ENCODE measurements at regions of chr7 and their contacts with region 1.

Region 1: DNA sequence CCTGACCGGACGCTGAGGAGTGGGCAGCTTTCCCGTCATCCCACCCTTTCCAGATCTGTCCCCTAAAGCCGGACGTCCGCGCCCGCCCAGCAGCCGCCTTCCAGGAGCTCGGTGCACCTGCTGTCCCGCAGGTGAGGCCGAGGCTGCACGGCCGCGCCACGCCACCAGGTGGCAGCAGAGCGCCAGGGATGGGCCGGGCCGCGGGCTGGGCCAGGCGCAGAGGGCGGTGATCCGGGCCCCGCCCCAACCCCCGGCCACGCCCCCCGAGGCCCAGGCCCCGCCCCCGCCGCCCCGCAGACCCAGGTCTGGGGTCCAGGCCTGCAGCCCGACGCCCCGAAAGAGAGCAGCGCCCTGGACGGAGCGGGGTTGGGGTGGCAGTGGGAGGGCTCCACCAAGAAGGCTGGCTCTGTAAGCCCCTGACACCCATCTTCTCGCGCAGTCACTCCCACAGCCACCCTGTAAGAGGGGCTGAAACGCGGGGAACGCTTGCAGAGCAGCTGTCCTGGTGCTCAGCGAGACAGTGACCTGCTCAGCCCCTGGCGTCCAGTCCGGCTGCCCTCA is 32.2 kb downstream of the FOXL3 start:
- DNase-seq: peak; percentile 62 to 85 (median 79)
- H3K4me3 ChIP-seq: no peak overlapping the region
- H3K27ac ChIP-seq: no peak overlapping the region
- H3K4me1 ChIP-seq: no peaks in the 10 kb centered on the region
- H3K27me3 ChIP-seq: no peaks in the 10 kb centered on the region
- CTCF ChIP-seq: peak; percentile 63 to 93 (median 90)
- EP300 ChIP-seq: no peak
- POLR2A ChIP-seq: no peak

Region 2: DNA sequence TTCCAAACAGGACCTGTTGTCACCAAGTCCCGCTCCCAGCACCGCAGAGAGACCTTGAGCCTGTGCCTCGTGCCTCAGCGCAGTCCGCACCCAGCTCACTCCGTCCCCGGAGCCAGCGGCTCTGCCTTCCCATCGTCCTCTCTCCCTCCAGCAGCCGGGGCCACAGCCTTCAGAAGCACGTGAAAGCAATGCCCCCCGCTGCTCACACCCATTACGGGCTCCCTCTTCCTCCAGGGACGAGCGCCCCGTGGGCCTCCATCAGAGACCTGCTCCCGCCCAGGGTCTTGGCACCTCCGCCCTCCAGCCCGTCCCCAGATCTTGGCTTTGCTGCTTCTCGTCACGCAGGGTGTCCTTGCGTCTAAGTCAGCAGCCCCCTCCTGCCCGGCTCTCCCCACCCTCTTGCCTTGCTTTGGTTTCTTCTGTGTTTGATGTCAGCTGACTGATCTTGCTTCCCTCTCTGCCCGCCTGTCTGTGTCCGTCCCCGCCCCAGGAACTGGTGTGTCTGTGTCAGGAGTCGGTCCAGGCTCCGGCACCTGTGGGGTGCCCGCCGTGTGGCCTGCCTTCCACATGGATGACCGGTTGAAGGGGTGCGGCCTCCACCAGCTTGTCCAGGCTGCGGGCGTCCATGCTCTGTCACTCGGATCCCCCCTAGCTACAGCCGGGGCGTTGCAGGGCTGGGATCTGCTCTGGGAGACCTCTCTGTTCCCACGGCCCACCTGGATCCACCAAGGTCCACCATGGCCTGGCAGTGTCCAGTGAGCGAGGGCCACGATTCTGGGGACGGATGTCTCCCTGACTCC is 29.7 kb after region 1 on chr7:
- intact Hi-C with region 1: no loop called
- DNase-seq: no peak
- H3K4me3 ChIP-seq: no peak overlapping the region
- H3K27ac ChIP-seq: no peak overlapping the region
- H3K4me1 ChIP-seq: no peaks in the 10 kb centered on the region
- H3K27me3 ChIP-seq: no peaks in the 10 kb centered on the region
- CTCF ChIP-seq: no peak
- EP300 ChIP-seq: no peak
- POLR2A ChIP-seq: no peak

Region 3: DNA sequence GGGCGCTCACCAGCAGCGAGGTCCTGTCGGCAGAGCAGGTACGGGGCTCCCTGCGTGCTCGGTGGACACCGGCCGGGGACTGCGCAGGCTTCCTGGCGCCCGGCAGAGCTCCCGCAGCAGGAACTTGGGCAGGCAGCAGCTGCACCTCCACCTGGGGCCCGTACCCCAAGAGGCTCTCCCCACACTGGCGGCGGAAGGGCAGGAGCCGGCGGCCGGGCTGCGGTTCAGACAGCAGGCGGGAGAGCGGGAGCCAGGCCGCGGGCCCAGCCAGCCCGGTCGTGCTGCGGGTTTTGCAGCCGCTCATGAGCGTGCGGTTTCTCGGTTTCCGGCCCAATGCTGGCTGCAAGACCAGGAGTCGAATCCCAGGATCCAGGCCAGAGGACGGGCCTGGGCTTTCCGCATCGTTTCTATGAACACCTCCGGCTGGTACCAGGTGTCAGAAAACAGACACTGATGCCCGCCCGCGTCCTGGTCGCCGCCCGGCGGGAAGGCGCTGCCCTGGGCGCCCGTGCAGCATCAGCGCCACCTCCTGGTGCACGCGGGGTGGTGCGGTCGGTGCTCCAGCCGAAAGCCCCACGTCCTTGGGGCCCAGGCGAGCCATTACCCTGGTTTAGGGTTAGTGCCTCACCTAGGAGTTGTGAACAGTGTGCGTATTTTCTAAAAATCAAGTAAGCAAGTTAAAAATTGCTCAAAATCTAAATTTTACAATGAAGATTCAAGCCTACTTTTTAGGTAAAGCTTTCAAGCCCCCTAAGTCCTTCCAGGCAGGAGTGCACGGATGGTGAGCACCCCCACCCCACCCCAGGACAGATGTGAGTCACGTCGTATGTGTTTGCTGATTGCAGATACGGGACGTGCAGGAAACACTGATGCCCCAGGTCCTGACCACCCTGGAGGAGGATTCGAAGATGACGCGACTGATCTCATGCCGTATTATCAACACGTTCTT is 452.2 kb after region 1 on chr7:
- intact Hi-C with region 1: loop called (anchors 2 to 5 kb)
- DNase-seq: peak in 4 of 5 donors; percentile 56 to 83 (median 72)
- H3K4me3 ChIP-seq: no peak overlapping the region
- H3K27ac ChIP-seq: no peak overlapping the region
- H3K4me1 ChIP-seq: peaks cover 18% of the 10 kb centered on the region
- H3K27me3 ChIP-seq: no peaks in the 10 kb centered on the region
- CTCF ChIP-seq: peak; percentile 81 to 87 (median 87)
- EP300 ChIP-seq: no peak
- POLR2A ChIP-seq: no peak

Region 4: GRCh38 chr7:883055-884021 is 561.1 kb after region 1 on chr7:
- intact Hi-C with region 1: loop called in 1 of 4 experiments (anchors 10 kb)
- DNase-seq: peak in 2 of 5 donors; percentile 41 to 47
- H3K4me3 ChIP-seq: no peak overlapping the region
- H3K27ac ChIP-seq: peak overlapping the region in 1 of 2 donors; percentile 24
- H3K4me1 ChIP-seq: peaks cover 29% of the 10 kb centered on the region
- H3K27me3 ChIP-seq: no peaks in the 10 kb centered on the region
- CTCF ChIP-seq: no peak
- EP300 ChIP-seq: no peak
- POLR2A ChIP-seq: no peak

Region 5: GRCh38 chr7:954330-955238 is 632.4 kb after region 1 on chr7 and contains the start of gene ADAP1:
- intact Hi-C with region 1: no loop called
- DNase-seq: peak in 2 of 5 donors; percentile 21 to 59
- H3K4me3 ChIP-seq: peak within 1 kb of the TSS; percentile 35
- H3K27ac ChIP-seq: no peak within 1 kb of the TSS
- H3K4me1 ChIP-seq: no peaks in the 10 kb centered on the region
- H3K27me3 ChIP-seq: peaks cover 5% of the 10 kb centered on the region
- CTCF ChIP-seq: peak in 1 of 3 donors; percentile 12
- EP300 ChIP-seq: no peak
- POLR2A ChIP-seq: no peak
- total RNA-seq, gene ADAP1: 0.96 to 16.4 (median 3.6) TPM

Region 6: GRCh38 chr7:1181640-1182039 is 859.4 kb after region 1 on chr7:
- intact Hi-C with region 1: loop called in 1 of 4 experiments (anchors 10 kb)
- DNase-seq: no peak
- H3K4me3 ChIP-seq: no peak overlapping the region
- H3K27ac ChIP-seq: no peak overlapping the region
- H3K4me1 ChIP-seq: no peaks in the 10 kb centered on the region
- H3K27me3 ChIP-seq: no peaks in the 10 kb centered on the region
- CTCF ChIP-seq: no peak
- EP300 ChIP-seq: no peak
- POLR2A ChIP-seq: no peak